Naive thymus-derived CD4-positive, alpha-beta T cell (primary cell): ENCODE measurements at regions of chr17 and their contacts with region 1.

Region 1: DNA sequence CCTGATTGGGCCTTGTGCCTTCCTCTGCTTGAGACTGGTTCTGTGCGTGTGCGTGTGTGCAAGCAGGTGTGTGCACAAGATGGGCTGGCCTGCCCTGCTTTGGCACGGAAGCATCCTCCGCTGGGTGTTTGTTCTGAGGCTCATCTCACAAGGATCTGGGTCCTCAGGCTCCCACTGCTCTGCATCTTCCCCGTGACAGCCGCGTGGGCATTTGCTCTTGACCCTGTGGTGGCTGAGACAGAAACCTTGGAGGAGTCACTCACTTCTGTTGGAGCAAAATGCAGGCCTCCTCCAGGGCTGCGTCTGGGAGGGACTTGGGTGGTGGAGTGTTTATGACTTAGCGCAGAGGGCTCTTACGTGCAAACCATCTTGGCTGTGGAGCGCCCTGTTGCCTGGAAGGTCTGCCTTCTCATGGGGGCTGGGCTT is 119.2 kb downstream of the RPTOR start:
- DNase-seq: peak in 8 of 9 donors; percentile 48 to 79 (median 60)
- ATAC-seq: peak; percentile 63
- H3K4me3 ChIP-seq: peak overlapping the region; percentile 40
- H3K4me3 Mint-ChIP-seq: peak overlapping the region; percentile 69 to 95 (median 82)
- H3K27ac ChIP-seq: peak overlapping the region; percentile 94
- H3K27ac Mint-ChIP-seq: peak overlapping the region; percentile 91 to 100 (median 96)
- H3K4me1 ChIP-seq: peaks cover 36 to 58% of the 10 kb centered on the region in 2 donors
- H3K4me1 Mint-ChIP-seq: peaks cover 52 to 88% (median 79%) of the 10 kb centered on the region in 7 donors
- H3K27me3 ChIP-seq: no peaks in the 10 kb centered on the region
- H3K27me3 Mint-ChIP-seq: no peaks in the 10 kb centered on the region

Region 2: GRCh38 chr17:80649678-80650672 is 13.8 kb before region 1 on chr17:
- CTCF ChIA-PET with region 1: interaction called, 4 read pairs
- POLR2A ChIA-PET with region 1: interaction called, 22 read pairs
- intact Hi-C with region 1: loop called (anchors 1 to 2 kb)
- DNase-seq: peak in 8 of 9 donors; percentile 51 to 76 (median 58)
- ATAC-seq: peak; percentile 79
- H3K4me3 ChIP-seq: peak overlapping the region; percentile 15
- H3K4me3 Mint-ChIP-seq: peak overlapping the region; percentile 64 to 97 (median 78)
- H3K27ac ChIP-seq: peak overlapping the region; percentile 48
- H3K27ac Mint-ChIP-seq: peak overlapping the region; percentile 88 to 99 (median 90)
- H3K4me1 ChIP-seq: peaks cover 20 to 55% of the 10 kb centered on the region in 2 donors
- H3K4me1 Mint-ChIP-seq: peaks cover 45 to 86% (median 80%) of the 10 kb centered on the region in 7 donors
- H3K27me3 ChIP-seq: no peaks in the 10 kb centered on the region
- H3K27me3 Mint-ChIP-seq: no peaks in the 10 kb centered on the region

Region 3: GRCh38 chr17:80704381-80704819 is 40.6 kb after region 1 on chr17:
- CTCF ChIA-PET with region 1: no interaction called
- POLR2A ChIA-PET with region 1: interaction called, 4 read pairs
- intact Hi-C with region 1: loop called in 1 of 2 experiments (anchors 1 kb)
- DNase-seq: no peak
- ATAC-seq: no peak
- H3K4me3 ChIP-seq: no peak overlapping the region
- H3K4me3 Mint-ChIP-seq: peak overlapping the region in 7 of 10 donors; percentile 42 to 76 (median 51)
- H3K27ac ChIP-seq: no peak overlapping the region
- H3K27ac Mint-ChIP-seq: peak overlapping the region in 7 of 9 donors; percentile 34 to 96 (median 88)
- H3K4me1 ChIP-seq: peaks cover 33 to 35% of the 10 kb centered on the region in 2 donors
- H3K4me1 Mint-ChIP-seq: peaks cover 46 to 91% (median 83%) of the 10 kb centered on the region in 7 donors
- H3K27me3 ChIP-seq: no peaks in the 10 kb centered on the region
- H3K27me3 Mint-ChIP-seq: no peaks in the 10 kb centered on the region

Region 4: GRCh38 chr17:80743181-80743771 is 79.5 kb after region 1 on chr17:
- CTCF ChIA-PET with region 1: no interaction called
- POLR2A ChIA-PET with region 1: interaction called, 3 read pairs
- intact Hi-C with region 1: loop called in 1 of 2 experiments (anchors 2 kb)
- DNase-seq: peak in 8 of 9 donors; percentile 40 to 82 (median 72)
- ATAC-seq: peak; percentile 75
- H3K4me3 ChIP-seq: peak overlapping the region; percentile 33
- H3K4me3 Mint-ChIP-seq: peak overlapping the region; percentile 80 to 93 (median 85)
- H3K27ac ChIP-seq: peak overlapping the region; percentile 74
- H3K27ac Mint-ChIP-seq: peak overlapping the region; percentile 83 to 95 (median 91)
- H3K4me1 ChIP-seq: peaks cover 0 to 61% of the 10 kb centered on the region in 2 donors
- H3K4me1 Mint-ChIP-seq: peaks cover 39 to 80% (median 69%) of the 10 kb centered on the region in 7 donors
- H3K27me3 ChIP-seq: no peaks in the 10 kb centered on the region
- H3K27me3 Mint-ChIP-seq: no peaks in the 10 kb centered on the region

Region 5: DNA sequence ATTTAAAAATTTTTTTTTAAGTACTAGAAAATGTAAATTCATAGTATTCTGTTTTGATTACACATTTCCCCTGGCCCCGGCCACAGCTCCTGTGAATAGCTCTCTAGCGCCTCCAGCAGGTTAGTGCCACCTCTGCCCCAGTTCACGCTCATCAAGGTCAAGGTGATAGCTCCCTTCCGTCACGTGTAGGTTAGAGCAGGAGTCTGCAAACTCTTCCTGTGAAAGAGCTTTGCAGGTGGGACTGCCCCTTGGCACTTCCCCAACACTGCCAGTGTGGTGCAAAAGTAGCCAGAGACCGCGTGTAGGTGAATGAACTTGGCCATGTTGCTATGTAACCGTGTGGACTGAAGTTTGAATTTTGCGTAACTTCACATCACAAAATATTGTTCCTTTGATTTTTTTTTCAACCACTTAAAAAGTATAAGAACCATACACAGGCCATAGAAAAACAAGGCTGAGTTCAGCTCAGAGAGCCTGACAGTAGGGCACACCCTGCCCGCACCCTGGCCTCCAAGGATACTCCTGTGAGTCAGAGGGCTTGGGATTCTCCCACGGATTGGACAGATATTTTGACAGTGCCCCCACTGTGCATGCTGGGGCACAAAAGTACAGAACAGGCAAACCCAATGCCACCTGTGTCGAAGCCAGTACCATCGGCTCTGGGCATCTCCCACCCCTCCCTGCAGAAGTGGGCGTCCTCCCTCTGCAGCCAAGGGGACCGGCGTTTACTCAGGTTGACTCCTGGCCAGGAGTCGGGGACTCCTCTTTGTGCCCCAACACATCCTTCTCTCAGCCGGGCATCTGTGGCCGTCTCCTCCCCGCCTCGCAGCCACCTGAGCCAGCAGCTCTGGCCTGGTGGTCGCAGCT is 235.8 kb after region 1 on chr17:
- CTCF ChIA-PET with region 1: no interaction called
- POLR2A ChIA-PET with region 1: no interaction called
- intact Hi-C with region 1: loop called in 1 of 2 experiments (anchors 2 kb)
- DNase-seq: peak; percentile 54 to 81 (median 76)
- ATAC-seq: peak; percentile 91
- H3K4me3 ChIP-seq: no peak overlapping the region
- H3K4me3 Mint-ChIP-seq: peak overlapping the region in 1 of 10 donors; percentile 25
- H3K27ac ChIP-seq: no peak overlapping the region
- H3K27ac Mint-ChIP-seq: peak overlapping the region in 4 of 9 donors; percentile 7 to 38 (median 26)
- H3K4me1 ChIP-seq: peaks cover 4 to 6% of the 10 kb centered on the region in 2 donors
- H3K4me1 Mint-ChIP-seq: peaks cover 5 to 63% (median 10%) of the 10 kb centered on the region in 7 donors
- H3K27me3 ChIP-seq: no peaks in the 10 kb centered on the region
- H3K27me3 Mint-ChIP-seq: no peaks in the 10 kb centered on the region